ENCODE measurements at regions of chr3 and their contacts with region 1.

Region 1: GRCh38 chr3:12841149-12841970 is at the start of gene RPL32:
- DNase-seq: peak; percentile 96
- ATAC-seq: peak; percentile 93
- H3K4me3 ChIP-seq: peak within 1 kb of the TSS; percentile 83
- H3K27ac ChIP-seq: peak within 1 kb of the TSS; percentile 85
- H3K4me1 ChIP-seq: peaks cover 15% of the 10 kb centered on the region
- H3K27me3 ChIP-seq: no peaks in the 10 kb centered on the region
- CTCF ChIP-seq: peak; percentile 89
- POLR2A ChIP-seq: peak; percentile 98
- RAD21 ChIP-seq: peak; percentile 29; the same call in 1 of the 2 replicates
- total RNA-seq, gene RPL32: 566 and 644 TPM in 2 replicates

Region 2: GRCh38 chr3:12444582-12445468 is 396.5 kb before region 1 on chr3:
- CTCF ChIA-PET with region 1: no interaction called
- POLR2A ChIA-PET with region 1: no interaction called
- dilution Hi-C with region 1: no loop called
- in situ Hi-C with region 1: no loop called
- intact Hi-C with region 1: no loop called
- DNase-seq: no peak
- ATAC-seq: no peak; the same call in 1 of the 2 replicates
- H3K4me3 ChIP-seq: no peak overlapping the region
- H3K27ac ChIP-seq: no peak overlapping the region
- H3K4me1 ChIP-seq: peaks cover 8% of the 10 kb centered on the region
- H3K27me3 ChIP-seq: peaks cover 6% of the 10 kb centered on the region; the same call in 1 of the 2 replicates
- CTCF ChIP-seq: no peak
- POLR2A ChIP-seq: no peak
- RAD21 ChIP-seq: no peak

Region 3: GRCh38 chr3:12822725-12823373 is 18.5 kb before region 1 on chr3:
- CTCF ChIA-PET with region 1: interaction called, 4 read pairs
- POLR2A ChIA-PET with region 1: interaction called, 14 read pairs
- dilution Hi-C with region 1: no loop called
- in situ Hi-C with region 1: no loop called
- intact Hi-C with region 1: no loop called
- DNase-seq: peak; percentile 51
- ATAC-seq: peak; percentile 90
- H3K4me3 ChIP-seq: no peak overlapping the region
- H3K27ac ChIP-seq: no peak overlapping the region
- H3K4me1 ChIP-seq: no peaks in the 10 kb centered on the region; the same call in 1 of the 2 replicates
- H3K27me3 ChIP-seq: no peaks in the 10 kb centered on the region
- CTCF ChIP-seq: peak; percentile 35; the same call in 1 of the 2 replicates
- POLR2A ChIP-seq: no peak
- RAD21 ChIP-seq: no peak

Region 4: DNA sequence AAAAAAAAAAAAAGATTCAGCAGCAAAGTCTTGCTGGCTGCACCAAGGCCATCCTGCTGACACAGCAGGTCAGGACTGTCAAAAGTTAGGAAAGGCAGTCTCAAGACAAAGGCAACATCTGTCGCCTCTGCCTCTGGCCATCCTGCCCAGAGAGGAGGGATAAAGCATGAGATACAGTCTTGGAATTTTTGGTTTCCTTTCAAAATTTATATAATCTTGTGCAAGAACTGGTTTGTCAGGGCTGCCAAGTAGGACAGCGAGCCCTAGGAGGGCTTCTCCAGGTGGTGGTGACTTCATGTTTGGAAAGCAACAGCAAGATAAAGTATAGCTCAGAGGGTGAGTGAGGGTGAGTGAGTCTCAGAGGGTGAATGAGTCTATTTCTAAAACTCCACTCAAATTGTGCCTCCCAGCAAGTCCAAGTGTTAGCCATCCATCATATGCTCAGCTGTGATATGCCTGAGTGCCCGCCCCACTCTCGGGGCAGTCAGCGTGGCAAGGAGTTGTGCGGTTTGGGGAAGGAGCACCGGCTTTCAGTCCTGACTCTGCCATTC is 11.9 kb after region 1 on chr3:
- CTCF ChIA-PET with region 1: interaction called, 6 read pairs
- POLR2A ChIA-PET with region 1: no interaction called
- dilution Hi-C with region 1: no loop called
- in situ Hi-C with region 1: no loop called
- intact Hi-C with region 1: loop called (anchors 1 kb)
- DNase-seq: peak; percentile 85
- ATAC-seq: peak; percentile 87
- H3K4me3 ChIP-seq: no peak overlapping the region
- H3K27ac ChIP-seq: no peak overlapping the region
- H3K4me1 ChIP-seq: peaks cover 4% of the 10 kb centered on the region; the same call in 1 of the 2 replicates
- H3K27me3 ChIP-seq: peaks cover 33% of the 10 kb centered on the region
- CTCF ChIP-seq: no peak
- POLR2A ChIP-seq: no peak
- RAD21 ChIP-seq: no peak

Region 5: DNA sequence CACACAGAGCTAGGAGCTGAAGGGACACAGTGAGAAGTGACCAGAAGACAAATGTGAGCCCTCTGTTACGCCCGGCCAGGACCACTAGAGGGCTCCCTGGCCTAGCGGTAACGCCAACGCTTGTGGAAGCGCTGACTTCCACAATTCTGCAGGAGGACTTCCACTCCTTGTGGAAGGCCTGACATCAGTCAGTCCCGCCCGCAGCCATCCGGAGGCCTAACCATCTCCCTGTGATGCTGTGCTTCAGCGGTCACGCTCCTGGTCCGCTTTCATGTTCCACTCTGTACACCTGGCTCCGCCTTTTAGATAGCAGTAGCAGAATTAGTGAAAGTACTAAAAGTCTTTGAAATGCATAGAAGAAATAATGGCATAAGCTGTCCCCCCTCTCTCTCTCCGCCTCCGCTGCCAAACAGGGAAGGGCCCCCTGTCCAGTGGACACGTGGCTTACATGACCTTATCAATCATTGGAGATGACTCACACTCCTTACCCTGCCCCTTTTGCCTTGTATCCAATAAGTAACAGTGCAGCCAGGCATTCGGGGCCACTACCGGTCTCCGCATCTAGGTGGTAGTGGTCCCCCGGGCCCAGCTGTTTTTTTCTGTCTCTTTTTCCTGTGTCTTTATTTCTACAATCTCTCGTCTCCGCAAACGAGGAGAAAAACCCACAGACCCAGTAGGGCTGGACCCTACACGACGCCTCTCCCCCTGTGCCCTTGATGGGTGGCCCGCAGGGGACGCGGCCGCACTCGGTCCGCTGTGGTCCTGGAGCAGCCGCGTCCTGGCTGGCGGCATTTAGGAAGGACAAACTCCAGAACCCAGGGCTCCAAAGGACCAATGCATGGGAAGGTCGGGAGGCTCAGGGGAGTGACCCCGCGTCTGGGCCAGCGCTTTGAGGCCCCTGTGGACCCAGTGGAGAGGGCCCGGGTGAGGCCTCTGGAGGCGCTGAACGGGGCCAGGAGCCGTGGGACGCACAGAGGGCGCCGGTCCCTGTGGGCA is 27.0 kb after region 1 on chr3:
- CTCF ChIA-PET with region 1: no interaction called
- POLR2A ChIA-PET with region 1: no interaction called
- dilution Hi-C with region 1: no loop called
- in situ Hi-C with region 1: no loop called
- intact Hi-C with region 1: loop called (anchors 1 kb)
- DNase-seq: peak; percentile 87
- ATAC-seq: peak; percentile 98
- H3K4me3 ChIP-seq: no peak overlapping the region
- H3K27ac ChIP-seq: no peak overlapping the region
- H3K4me1 ChIP-seq: no peaks in the 10 kb centered on the region; the same call in 1 of the 2 replicates
- H3K27me3 ChIP-seq: peaks cover 26% of the 10 kb centered on the region
- CTCF ChIP-seq: peak; percentile 95
- POLR2A ChIP-seq: 0 out of 2 replicates have a peak, but pooled peaks have one; percentile 24
- RAD21 ChIP-seq: peak; percentile 86

Measured in IMR-90 (cell line).